Gastrocnemius medialis (tissue), 4 donors: ENCODE measurements at regions of chr11 and their contacts with region 1.

Region 1: GRCh38 chr11:10735481-10736475 is 15.3 kb upstream of the CTR9 start:
- DNase-seq: peak; percentile 92 to 94
- ATAC-seq: peak; percentile 94 to 95
- H3K4me3 ChIP-seq: peak overlapping the region in 3 of 4 donors; percentile 19 to 35 (median 30)
- H3K27ac ChIP-seq: peak overlapping the region; percentile 76 to 81 (median 80)
- H3K4me1 ChIP-seq: peaks cover 15 to 20% of the 10 kb centered on the region in 2 donors
- H3K27me3 ChIP-seq: no peaks in the 10 kb centered on the region
- CTCF ChIP-seq: peak; percentile 97 to 99 (median 98)
- POLR2A ChIP-seq: no peak

Region 2: GRCh38 chr11:10490398-10491241 is 245.2 kb before region 1 on chr11:
- in situ Hi-C with region 1: no loop called
- intact Hi-C with region 1: loop called (anchors 5 kb)
- DNase-seq: peak; percentile 95 to 96
- ATAC-seq: peak; percentile 92 to 95
- H3K4me3 ChIP-seq: no peak overlapping the region
- H3K27ac ChIP-seq: peak overlapping the region; percentile 86 to 90 (median 88)
- H3K4me1 ChIP-seq: peaks cover 28 to 29% of the 10 kb centered on the region in 2 donors
- H3K27me3 ChIP-seq: no peaks in the 10 kb centered on the region
- CTCF ChIP-seq: no peak
- POLR2A ChIP-seq: no peak

Region 3: DNA sequence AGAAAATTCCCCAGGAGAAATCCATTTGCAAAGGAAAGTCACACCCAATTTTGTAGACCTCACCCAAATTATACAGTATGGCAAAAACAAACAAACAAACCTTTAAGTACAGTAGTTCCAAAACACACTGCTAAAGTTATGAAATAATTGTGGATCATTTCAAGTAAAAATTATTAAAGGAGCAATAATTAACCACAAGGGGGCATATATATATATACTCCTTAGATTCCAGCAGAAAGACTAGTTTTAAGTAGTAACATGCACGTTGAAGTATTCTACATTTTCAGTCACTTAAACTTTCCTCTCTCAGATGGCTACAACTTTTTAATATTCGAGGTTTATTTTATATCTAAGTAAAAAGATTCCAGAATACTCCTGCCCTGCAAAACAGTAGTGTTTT is 221.6 kb before region 1 on chr11:
- in situ Hi-C with region 1: loop called in 2 of 4 experiments (anchors 10 to 25 kb)
- intact Hi-C with region 1: loop called (anchors 10 kb)
- DNase-seq: no peak
- ATAC-seq: no peak
- H3K4me3 ChIP-seq: no peak overlapping the region
- H3K27ac ChIP-seq: no peak overlapping the region
- H3K4me1 ChIP-seq: peaks cover 0 to 10% of the 10 kb centered on the region in 2 donors
- H3K27me3 ChIP-seq: no peaks in the 10 kb centered on the region
- CTCF ChIP-seq: peak in 2 of 5 experiments; percentile 31 to 51
- POLR2A ChIP-seq: no peak

Region 4: GRCh38 chr11:10540923-10541560 is 194.7 kb before region 1 on chr11 and contains the start of gene RNF141:
- in situ Hi-C with region 1: loop called in 2 of 4 experiments (anchors 10 to 25 kb)
- intact Hi-C with region 1: loop called (anchors 10 kb)
- DNase-seq: peak; percentile 91 to 93
- ATAC-seq: peak; percentile 90 to 93
- H3K4me3 ChIP-seq: peak within 1 kb of the TSS; percentile 89 to 93 (median 92)
- H3K27ac ChIP-seq: peak within 1 kb of the TSS; percentile 91 to 97 (median 94)
- H3K4me1 ChIP-seq: peaks cover 8 to 13% of the 10 kb centered on the region in 2 donors
- H3K27me3 ChIP-seq: no peaks in the 10 kb centered on the region
- CTCF ChIP-seq: peak; percentile 82 to 88 (median 83)
- POLR2A ChIP-seq: peak; percentile 80 to 93
- total RNA-seq, gene RNF141: 16.8 to 38.2 (median 19.0) TPM

Region 5: DNA sequence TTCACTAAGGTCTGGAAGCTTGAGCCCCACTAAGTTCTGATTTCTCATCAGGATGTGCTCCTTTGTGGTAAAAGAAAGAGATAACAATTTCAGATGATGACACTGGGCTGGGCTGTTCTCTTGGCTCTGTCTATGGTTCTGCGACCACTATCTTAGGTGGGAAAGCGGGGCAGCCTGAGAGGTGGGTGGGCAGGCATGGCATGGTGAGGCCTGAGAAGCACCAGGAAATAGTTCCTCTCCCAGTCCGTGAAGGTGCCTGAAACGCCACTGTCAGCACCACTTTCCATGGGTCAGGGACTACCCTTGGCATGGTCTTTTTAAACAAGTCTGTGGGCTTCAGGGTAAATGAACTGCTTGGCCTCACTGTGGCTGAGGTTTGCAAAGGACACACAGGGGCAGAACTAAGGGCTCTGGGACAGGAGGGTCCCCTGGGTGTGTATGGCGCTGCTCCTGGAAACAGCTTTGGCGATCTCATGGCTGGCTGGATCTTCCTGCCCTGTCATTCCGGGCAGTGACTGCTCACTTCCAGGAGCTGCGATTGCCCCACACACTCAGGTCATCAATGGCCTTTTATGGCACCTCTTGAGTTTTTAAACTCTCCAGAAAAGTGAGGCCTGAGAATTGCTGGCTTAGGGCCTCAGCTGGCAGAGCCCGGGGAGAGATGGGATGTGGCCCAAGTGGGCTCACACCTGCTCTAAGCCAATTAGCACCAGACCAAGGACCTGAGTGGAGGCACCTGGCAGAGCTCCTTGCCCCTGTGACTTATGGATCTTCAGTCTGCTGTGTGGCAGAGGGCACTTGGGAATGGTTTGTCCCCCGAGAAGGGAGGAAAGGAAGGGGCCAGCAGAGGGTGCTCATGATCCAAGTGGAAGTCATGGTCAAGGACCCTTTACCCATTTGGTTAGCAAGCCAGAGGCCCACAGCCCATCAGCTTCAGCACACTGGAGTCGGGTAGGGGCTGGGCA is 111.7 kb before region 1 on chr11:
- in situ Hi-C with region 1: loop called in 1 of 4 experiments (anchors 5 kb)
- intact Hi-C with region 1: loop called (anchors 2 kb)
- DNase-seq: peak in 1 of 2 donors; percentile 35
- ATAC-seq: peak; percentile 41
- H3K4me3 ChIP-seq: no peak overlapping the region
- H3K27ac ChIP-seq: peak overlapping the region in 2 of 4 donors; percentile 39 to 57
- H3K4me1 ChIP-seq: peaks cover 13 to 20% of the 10 kb centered on the region in 2 donors
- H3K27me3 ChIP-seq: no peaks in the 10 kb centered on the region
- CTCF ChIP-seq: peak in 4 of 5 experiments; percentile 42 to 61 (median 50)
- POLR2A ChIP-seq: no peak

Region 6: GRCh38 chr11:10725114-10725906 is 10.5 kb before region 1 on chr11:
- in situ Hi-C with region 1: no loop called
- intact Hi-C with region 1: no loop called
- DNase-seq: no peak
- ATAC-seq: no peak
- H3K4me3 ChIP-seq: no peak overlapping the region
- H3K27ac ChIP-seq: no peak overlapping the region
- H3K4me1 ChIP-seq: no peaks in the 10 kb centered on the region
- H3K27me3 ChIP-seq: no peaks in the 10 kb centered on the region
- CTCF ChIP-seq: no peak
- POLR2A ChIP-seq: no peak

Region 7: GRCh38 chr11:10747706-10748105 is 11.9 kb after region 1 on chr11:
- in situ Hi-C with region 1: no loop called
- intact Hi-C with region 1: no loop called
- DNase-seq: no peak
- ATAC-seq: no peak
- H3K4me3 ChIP-seq: no peak overlapping the region
- H3K27ac ChIP-seq: peak overlapping the region; percentile 33 to 96 (median 64)
- H3K4me1 ChIP-seq: peaks cover 9 to 19% of the 10 kb centered on the region in 2 donors
- H3K27me3 ChIP-seq: no peaks in the 10 kb centered on the region
- CTCF ChIP-seq: no peak
- POLR2A ChIP-seq: no peak

Region 8: GRCh38 chr11:11993839-11994238 is 1258.1 kb after region 1 on chr11:
- in situ Hi-C with region 1: no loop called
- intact Hi-C with region 1: no loop called
- DNase-seq: peak; percentile 47 to 54
- ATAC-seq: peak; percentile 95 to 97
- H3K4me3 ChIP-seq: no peak overlapping the region
- H3K27ac ChIP-seq: peak overlapping the region in 1 of 4 donors; percentile 27
- H3K4me1 ChIP-seq: peaks cover 0 to 9% of the 10 kb centered on the region in 2 donors
- H3K27me3 ChIP-seq: peaks cover 0 to 3% (median 0%) of the 10 kb centered on the region in 3 donors
- CTCF ChIP-seq: no peak
- POLR2A ChIP-seq: no peak